ENCODE measurements at regions of chr15 and their contacts with region 1.

Region 1: GRCh38 chr15:63402498-63403253 is 21.0 kb upstream of the CA12 start:
- DNase-seq: peak; percentile 41
- H3K4me3 ChIP-seq: no peak overlapping the region
- H3K27ac ChIP-seq: no peak overlapping the region
- H3K4me1 ChIP-seq: peaks cover 1 to 6% of the 10 kb centered on the region in 2 experiments; a peak in 3 of 4 replicates
- H3K27me3 ChIP-seq: no peaks in the 10 kb centered on the region
- CTCF ChIP-seq: peak; percentile 82
- EP300 ChIP-seq: no peak
- RAD21 ChIP-seq: peak; percentile 87

Region 2: GRCh38 chr15:63296195-63296594 is 106.5 kb before region 1 on chr15:
- CTCF ChIA-PET with region 1: interaction called, 73 read pairs
- POLR2A ChIA-PET with region 1: interaction called, 4 read pairs
- DNase-seq: no peak
- H3K4me3 ChIP-seq: no peak overlapping the region
- H3K27ac ChIP-seq: no peak overlapping the region
- H3K4me1 ChIP-seq: peaks cover 0 to under 1% of the 10 kb centered on the region in 2 experiments; a peak in 1 of 4 replicates
- H3K27me3 ChIP-seq: no peaks in the 10 kb centered on the region
- CTCF ChIP-seq: no peak
- EP300 ChIP-seq: no peak
- RAD21 ChIP-seq: no peak

Region 3: GRCh38 chr15:63414474-63415120 is 11.9 kb after region 1 on chr15:
- CTCF ChIA-PET with region 1: interaction called, 17 read pairs
- POLR2A ChIA-PET with region 1: no interaction called
- DNase-seq: no peak
- H3K4me3 ChIP-seq: no peak overlapping the region
- H3K27ac ChIP-seq: no peak overlapping the region
- H3K4me1 ChIP-seq: peaks cover 0 to 5% of the 10 kb centered on the region in 2 experiments; a peak in 1 of 4 replicates
- H3K27me3 ChIP-seq: no peaks in the 10 kb centered on the region
- CTCF ChIP-seq: no peak
- EP300 ChIP-seq: no peak
- RAD21 ChIP-seq: no peak

Region 4: GRCh38 chr15:63626955-63627354 is 224.3 kb after region 1 on chr15:
- CTCF ChIA-PET with region 1: no interaction called
- POLR2A ChIA-PET with region 1: no interaction called
- DNase-seq: no peak
- H3K4me3 ChIP-seq: no peak overlapping the region
- H3K27ac ChIP-seq: no peak overlapping the region
- H3K4me1 ChIP-seq: no peaks in the 10 kb centered on the region
- H3K27me3 ChIP-seq: no peaks in the 10 kb centered on the region
- CTCF ChIP-seq: no peak
- EP300 ChIP-seq: no peak
- RAD21 ChIP-seq: no peak

Measured in SK-N-SH (cell line).